CD8-positive, alpha-beta T cell (primary cell): ENCODE measurements at regions of chr1 and their contacts with region 1.

Region 1: DNA sequence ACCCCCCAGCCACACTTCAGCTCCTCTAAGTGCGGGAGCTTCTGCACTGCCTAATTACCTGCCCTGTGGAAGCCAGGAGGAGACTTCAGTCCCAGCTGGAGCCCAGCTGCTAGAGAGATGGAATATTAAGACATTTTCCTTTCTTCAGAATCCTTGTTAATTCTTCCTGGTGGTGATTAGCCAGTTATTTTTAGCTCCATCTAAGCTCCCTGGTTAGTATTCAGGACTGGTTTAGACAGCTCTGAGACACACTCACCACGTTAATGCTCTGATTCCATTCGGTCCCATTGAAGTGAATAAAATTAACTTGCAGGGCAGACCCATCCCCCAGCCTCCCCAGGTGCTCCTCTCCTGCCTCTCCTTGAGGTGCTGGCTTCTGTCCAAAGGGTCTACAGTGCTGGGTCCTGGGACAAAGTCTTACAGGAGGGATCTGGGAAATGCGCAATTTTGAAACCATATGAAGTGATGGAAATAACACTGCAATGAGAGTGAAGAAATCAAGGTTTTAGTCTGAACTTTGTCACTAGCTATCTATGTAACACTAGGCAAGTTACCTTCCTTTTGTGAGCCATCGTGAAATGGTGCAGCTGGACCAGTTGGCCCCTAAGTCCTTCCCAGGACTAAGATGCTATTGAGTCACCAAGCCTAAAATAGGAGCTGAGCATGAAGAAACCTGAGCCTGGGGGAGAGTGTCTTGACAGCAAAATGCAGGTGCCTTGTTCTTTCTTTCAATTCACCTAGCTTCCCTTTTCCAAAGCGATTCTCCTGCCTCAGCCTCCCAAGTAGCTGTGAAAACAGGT is 117.4 kb upstream of the ATP1A1 start:
- DNase-seq: no peak
- ATAC-seq: no peak
- H3K4me3 ChIP-seq: no peak overlapping the region
- H3K4me3 Mint-ChIP-seq: no peak overlapping the region
- H3K27ac ChIP-seq: no peak overlapping the region
- H3K27ac Mint-ChIP-seq: no peak overlapping the region
- H3K4me1 ChIP-seq: no peaks in the 10 kb centered on the region
- H3K4me1 Mint-ChIP-seq: peaks cover 10% of the 10 kb centered on the region
- H3K27me3 ChIP-seq: no peaks in the 10 kb centered on the region
- H3K27me3 Mint-ChIP-seq: no peaks in the 10 kb centered on the region
- CTCF ChIP-seq: no peak

Region 2: DNA sequence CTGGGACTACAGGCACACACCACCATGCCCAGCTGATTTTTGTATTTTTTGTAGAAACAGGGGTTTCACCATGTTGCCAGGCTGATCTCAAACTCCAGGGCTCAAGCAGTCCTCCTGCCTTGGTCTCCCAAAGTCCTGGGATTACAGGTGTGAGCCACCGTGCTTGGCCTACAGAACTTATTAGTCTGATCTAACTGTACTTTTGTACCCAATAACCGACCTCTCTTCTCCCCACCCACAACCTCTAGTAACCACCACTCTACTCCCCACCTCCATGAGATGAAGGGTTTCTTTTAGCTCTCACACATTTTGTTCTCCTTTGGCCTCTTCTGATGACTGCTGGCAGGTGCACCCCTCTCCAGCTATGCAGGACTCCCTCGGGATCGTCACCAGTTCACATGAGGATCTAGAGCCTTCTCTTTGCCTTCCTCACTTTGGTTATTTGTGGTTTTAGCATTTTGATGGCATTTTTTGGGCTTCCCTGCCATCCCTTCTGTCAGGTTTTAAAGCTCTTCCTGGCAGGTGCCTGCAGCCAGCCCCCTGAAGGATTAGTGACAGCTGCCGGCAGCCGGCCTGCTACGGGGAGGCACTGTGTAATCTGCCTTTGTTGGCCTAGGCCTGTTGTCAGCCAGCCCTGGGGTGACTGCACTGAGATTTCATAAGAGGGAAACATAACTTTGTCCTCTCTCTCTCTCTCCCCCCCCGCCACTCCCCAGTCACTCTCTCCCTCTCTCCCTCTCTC is 17.5 kb after region 1 on chr1:
- CTCF ChIA-PET with region 1: interaction called, 3 read pairs
- POLR2A ChIA-PET with region 1: no interaction called
- intact Hi-C with region 1: loop called in 1 of 2 experiments (anchors 1 kb)
- DNase-seq: no peak
- ATAC-seq: no peak
- H3K4me3 ChIP-seq: no peak overlapping the region
- H3K4me3 Mint-ChIP-seq: no peak overlapping the region
- H3K27ac ChIP-seq: no peak overlapping the region
- H3K27ac Mint-ChIP-seq: no peak overlapping the region
- H3K4me1 ChIP-seq: no peaks in the 10 kb centered on the region
- H3K4me1 Mint-ChIP-seq: peaks cover 2% of the 10 kb centered on the region
- H3K27me3 ChIP-seq: no peaks in the 10 kb centered on the region
- H3K27me3 Mint-ChIP-seq: no peaks in the 10 kb centered on the region
- CTCF ChIP-seq: no peak